Activated CD8-positive, alpha-beta T cell treated with anti-CD3 and anti-CD28 coated beads for 36 hours (primary cell): ENCODE measurements at regions of chr3 and their contacts with region 1.

Region 1: GRCh38 chr3:56801662-56802377 is at the start of gene ARHGEF3:
- DNase-seq: peak; percentile 89
- ATAC-seq: peak; percentile 82
- H3K4me3 Mint-ChIP-seq: peak within 1 kb of the TSS; percentile 87
- H3K27ac Mint-ChIP-seq: peak within 1 kb of the TSS; percentile 91
- H3K4me1 Mint-ChIP-seq: peaks cover 24% of the 10 kb centered on the region
- H3K27me3 Mint-ChIP-seq: no peaks in the 10 kb centered on the region
- CTCF ChIP-seq: peak; percentile 61
- total RNA-seq, gene ARHGEF3: 63.0 to 66.5 TPM

Region 2: DNA sequence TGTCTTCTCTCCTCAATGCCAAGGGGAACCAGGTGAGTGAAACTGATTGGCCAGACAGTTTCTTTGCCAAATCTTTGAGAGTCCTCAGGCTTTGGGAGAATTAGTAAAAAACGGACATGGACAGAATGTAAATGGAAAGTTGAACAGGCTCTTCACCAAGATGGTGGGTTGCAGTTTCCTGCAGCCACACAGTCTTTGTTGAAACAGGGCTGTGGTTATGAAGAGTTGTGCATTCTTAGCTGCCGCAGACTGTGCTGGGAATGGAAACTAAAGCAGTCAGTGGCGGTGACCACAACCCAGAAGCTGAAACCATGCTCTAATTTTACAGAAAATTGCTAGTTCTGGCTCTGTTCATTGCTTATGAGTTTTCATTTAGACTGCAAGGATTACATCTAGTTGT is 76.6 kb before region 1 on chr3:
- CTCF ChIA-PET with region 1: interaction called, 40 read pairs
- POLR2A ChIA-PET with region 1: interaction called, 5 read pairs
- intact Hi-C with region 1: no loop called
- DNase-seq: peak; percentile 89
- ATAC-seq: peak; percentile 89
- H3K4me3 Mint-ChIP-seq: peak overlapping the region; percentile 63
- H3K27ac Mint-ChIP-seq: peak overlapping the region; percentile 95
- H3K4me1 Mint-ChIP-seq: peaks cover 58% of the 10 kb centered on the region
- H3K27me3 Mint-ChIP-seq: no peaks in the 10 kb centered on the region
- CTCF ChIP-seq: no peak

Region 3: GRCh38 chr3:56764904-56765547 is 36.8 kb before region 1 on chr3:
- CTCF ChIA-PET with region 1: interaction called, 127 read pairs
- POLR2A ChIA-PET with region 1: interaction called, 15 read pairs
- intact Hi-C with region 1: no loop called
- DNase-seq: no peak
- ATAC-seq: no peak
- H3K4me3 Mint-ChIP-seq: no peak overlapping the region
- H3K27ac Mint-ChIP-seq: peak overlapping the region; percentile 81
- H3K4me1 Mint-ChIP-seq: peaks cover 78% of the 10 kb centered on the region
- H3K27me3 Mint-ChIP-seq: no peaks in the 10 kb centered on the region
- CTCF ChIP-seq: no peak

Region 4: GRCh38 chr3:56812754-56813650 is 11.2 kb after region 1 on chr3:
- CTCF ChIA-PET with region 1: interaction called, 44 read pairs
- POLR2A ChIA-PET with region 1: interaction called, 14 read pairs
- intact Hi-C with region 1: no loop called
- DNase-seq: no peak
- ATAC-seq: no peak
- H3K4me3 Mint-ChIP-seq: no peak overlapping the region
- H3K27ac Mint-ChIP-seq: peak overlapping the region; percentile 67
- H3K4me1 Mint-ChIP-seq: peaks cover 63% of the 10 kb centered on the region
- H3K27me3 Mint-ChIP-seq: no peaks in the 10 kb centered on the region
- CTCF ChIP-seq: no peak

Region 5: GRCh38 chr3:56878074-56878473 is 76.3 kb after region 1 on chr3:
- CTCF ChIA-PET with region 1: interaction called, 18 read pairs
- POLR2A ChIA-PET with region 1: interaction called, 11 read pairs
- intact Hi-C with region 1: no loop called
- DNase-seq: peak; percentile 86
- ATAC-seq: peak; percentile 85
- H3K4me3 Mint-ChIP-seq: peak overlapping the region; percentile 64
- H3K27ac Mint-ChIP-seq: peak overlapping the region; percentile 97
- H3K4me1 Mint-ChIP-seq: peaks cover 88% of the 10 kb centered on the region
- H3K27me3 Mint-ChIP-seq: no peaks in the 10 kb centered on the region
- CTCF ChIP-seq: no peak

Region 6: DNA sequence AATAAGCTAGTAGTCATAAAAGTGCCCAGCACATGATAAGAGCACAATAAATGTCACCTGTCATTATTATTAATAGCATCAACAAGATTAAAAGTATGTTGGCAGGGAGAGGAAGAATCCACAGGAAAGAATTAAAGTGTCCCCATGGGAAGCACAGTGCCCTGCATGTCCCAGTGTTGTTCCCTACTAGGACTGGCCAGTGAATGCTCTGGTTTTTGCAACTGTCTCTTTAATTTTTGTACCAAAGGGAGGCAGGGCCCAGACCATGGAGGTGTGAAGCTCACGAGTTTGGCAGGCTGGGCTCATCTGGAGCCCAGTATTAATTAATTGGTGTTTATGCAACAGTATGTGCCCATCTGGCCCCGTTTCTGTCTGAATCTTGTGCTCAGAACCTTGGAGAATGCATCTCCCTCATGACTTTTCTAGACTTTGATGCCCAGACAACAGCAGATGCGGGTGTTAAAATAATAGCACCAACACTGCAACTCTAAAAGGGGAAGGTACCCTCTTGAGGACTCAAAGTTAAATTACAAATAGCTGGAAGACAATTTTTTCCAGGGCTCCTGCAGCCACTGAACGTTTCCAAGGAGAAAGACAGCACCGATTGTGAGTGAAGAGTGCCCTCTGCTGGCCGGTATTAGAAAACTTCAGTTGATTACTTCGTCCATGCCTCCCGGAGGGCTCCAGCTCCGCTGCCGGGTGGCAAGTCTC is 186.8 kb after region 1 on chr3:
- CTCF ChIA-PET with region 1: interaction called, 354 read pairs
- POLR2A ChIA-PET with region 1: interaction called, 24 read pairs
- intact Hi-C with region 1: loop called (anchors 2 kb)
- DNase-seq: peak; percentile 79
- ATAC-seq: peak; percentile 57
- H3K4me3 Mint-ChIP-seq: no peak overlapping the region
- H3K27ac Mint-ChIP-seq: no peak overlapping the region
- H3K4me1 Mint-ChIP-seq: peaks cover 33% of the 10 kb centered on the region
- H3K27me3 Mint-ChIP-seq: peaks cover 7% of the 10 kb centered on the region
- CTCF ChIP-seq: peak; percentile 99